Tibial artery (tissue), 4 donors: ENCODE measurements at regions of chr14 and their contacts with region 1.

Region 1: DNA sequence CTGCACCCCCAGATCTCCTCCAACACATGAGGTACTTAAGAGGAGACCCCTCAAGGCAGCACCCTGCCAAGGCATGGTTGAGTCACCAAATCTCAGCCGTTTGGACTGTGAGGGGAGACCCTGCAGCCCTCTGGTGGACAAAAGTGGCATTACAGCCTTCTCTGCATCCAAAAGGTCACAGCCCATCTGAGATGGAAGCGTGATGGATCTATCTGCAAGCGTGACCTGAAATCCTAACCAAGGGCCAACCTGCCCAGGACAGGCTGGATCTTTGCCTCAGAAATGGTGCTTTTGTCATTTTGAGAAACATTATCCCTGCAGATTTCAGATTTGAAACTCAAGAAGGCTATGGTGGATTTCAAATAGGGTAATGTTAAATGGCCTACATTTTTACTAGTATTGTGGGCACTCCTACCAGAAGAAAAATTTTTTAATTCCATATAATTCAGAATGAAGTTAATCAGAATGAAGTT is 23.7 kb upstream of the DHRS4 start:
- DNase-seq: peak; percentile 79 to 80
- H3K4me3 ChIP-seq: no peak overlapping the region
- H3K27ac ChIP-seq: no peak overlapping the region
- H3K4me1 ChIP-seq: peaks cover 0 to 9% (median 4%) of the 10 kb centered on the region in 4 donors
- H3K27me3 ChIP-seq: no peaks in the 10 kb centered on the region
- CTCF ChIP-seq: peak; percentile 72 to 83

Region 2: DNA sequence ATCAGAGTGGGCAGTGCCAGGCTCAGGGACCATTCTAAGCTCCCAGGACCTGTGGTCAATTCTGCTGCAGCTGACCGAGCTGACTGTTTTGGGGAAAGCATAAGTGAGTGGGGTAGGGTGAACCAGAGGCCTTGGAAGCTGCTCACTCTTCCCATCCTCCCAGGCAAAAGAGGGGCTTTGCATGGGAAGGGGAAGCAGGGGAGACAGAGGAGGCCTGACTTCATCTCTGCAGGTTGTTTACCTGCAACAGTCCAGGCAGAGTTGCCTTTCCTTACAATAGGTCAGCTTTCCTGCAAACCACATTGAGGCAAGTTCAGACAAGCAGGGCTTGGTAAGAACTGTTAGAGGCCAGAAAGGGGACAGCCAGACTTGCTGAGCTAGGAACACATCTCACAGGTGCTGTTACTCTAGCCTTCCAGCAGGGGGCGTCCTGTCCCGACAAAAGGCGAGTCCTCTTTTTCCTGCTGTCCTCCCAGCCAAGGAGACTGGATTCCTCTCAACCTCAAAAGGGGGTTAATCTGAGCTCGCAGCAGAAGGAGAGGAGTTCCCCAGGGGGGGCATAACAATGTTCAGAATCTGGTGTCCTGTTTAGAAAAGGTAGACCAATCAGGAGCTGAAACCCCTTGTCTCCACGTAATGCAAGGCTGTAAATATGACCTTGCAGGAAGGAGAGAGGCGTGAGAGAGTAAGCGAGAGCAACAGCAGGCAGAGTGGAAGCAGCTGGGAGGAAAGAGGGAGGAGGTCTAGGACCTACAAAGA is 298.0 kb before region 1 on chr14:
- intact Hi-C with region 1: loop called (anchors 2 kb)
- DNase-seq: peak in 1 of 2 donors; percentile 73
- H3K4me3 ChIP-seq: peak overlapping the region in 1 of 2 donors; percentile 25
- H3K27ac ChIP-seq: no peak overlapping the region
- H3K4me1 ChIP-seq: peaks cover 0 to 9% (median 0%) of the 10 kb centered on the region in 4 donors
- H3K27me3 ChIP-seq: no peaks in the 10 kb centered on the region
- CTCF ChIP-seq: peak; percentile 74 to 83

Region 3: DNA sequence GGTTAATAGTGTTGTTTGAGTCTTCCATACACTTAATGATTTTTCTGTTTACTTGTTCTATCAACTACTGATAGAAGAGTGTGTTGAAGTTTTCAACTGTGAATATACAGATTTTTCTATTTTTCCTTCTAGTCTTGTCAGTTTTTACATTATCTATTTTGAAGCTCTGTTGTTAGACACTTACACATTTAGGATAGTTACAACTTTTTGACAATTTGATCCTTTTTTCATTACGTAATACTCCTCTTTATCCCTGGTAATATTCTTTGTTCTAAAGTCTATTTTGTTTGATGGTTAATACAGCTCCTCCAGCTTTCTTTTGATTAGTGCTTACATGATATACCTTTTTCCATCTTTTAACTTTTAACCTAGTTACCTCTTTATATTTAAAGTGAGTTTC is 248.5 kb before region 1 on chr14:
- intact Hi-C with region 1: no loop called
- DNase-seq: no peak
- H3K4me3 ChIP-seq: no peak overlapping the region
- H3K27ac ChIP-seq: no peak overlapping the region
- H3K4me1 ChIP-seq: no peaks in the 10 kb centered on the region
- H3K27me3 ChIP-seq: no peaks in the 10 kb centered on the region
- CTCF ChIP-seq: no peak

Region 4: GRCh38 chr14:23827100-23827892 is 102.6 kb before region 1 on chr14:
- intact Hi-C with region 1: loop called (anchors 5 kb)
- DNase-seq: no peak
- H3K4me3 ChIP-seq: no peak overlapping the region
- H3K27ac ChIP-seq: no peak overlapping the region
- H3K4me1 ChIP-seq: peaks cover 0 to 10% (median 0%) of the 10 kb centered on the region in 4 donors
- H3K27me3 ChIP-seq: no peaks in the 10 kb centered on the region
- CTCF ChIP-seq: no peak